Activated B cell treated with CpG ODN at 0.5 μM for 24 hours (primary cell): ENCODE measurements at regions of chr9 and their contacts with region 1.

Region 1: GRCh38 chr9:137223078-137223970 is 1.3 kb upstream of the RNF208 start:
- DNase-seq: peak; percentile 97
- ATAC-seq: peak; percentile 93
- H3K4me3 Mint-ChIP-seq: peak overlapping the region; percentile 83
- H3K27ac Mint-ChIP-seq: peak overlapping the region; percentile 73
- H3K4me1 Mint-ChIP-seq: peaks cover 20% of the 10 kb centered on the region
- H3K27me3 Mint-ChIP-seq: peaks cover 2% of the 10 kb centered on the region
- CTCF ChIP-seq: no peak

Region 2: DNA sequence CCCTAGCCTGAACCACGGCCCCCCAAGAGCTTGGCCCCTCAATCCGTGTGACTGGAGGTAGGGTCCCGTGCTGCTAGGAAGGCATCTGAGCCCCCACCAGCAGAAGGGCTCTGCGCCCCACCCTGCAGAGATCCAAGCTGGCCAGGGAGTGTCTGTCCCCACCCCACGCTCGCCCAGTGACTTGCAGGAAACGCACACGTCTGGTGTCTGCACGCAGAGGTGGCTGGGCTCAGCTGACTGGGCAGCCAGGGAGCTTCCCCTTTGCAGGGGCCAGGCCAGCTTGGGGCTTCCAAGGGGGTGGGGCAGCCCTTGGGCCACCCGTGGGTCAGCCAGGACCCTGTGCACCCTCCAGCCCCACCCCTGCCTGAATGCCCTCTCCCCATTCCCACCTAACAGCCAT is 701.8 kb before region 1 on chr9:
- CTCF ChIA-PET with region 1: no interaction called
- POLR2A ChIA-PET with region 1: no interaction called
- intact Hi-C with region 1: no loop called
- DNase-seq: no peak
- ATAC-seq: peak; percentile 25
- H3K4me3 Mint-ChIP-seq: no peak overlapping the region
- H3K27ac Mint-ChIP-seq: no peak overlapping the region
- H3K4me1 Mint-ChIP-seq: peaks cover 7% of the 10 kb centered on the region
- H3K27me3 Mint-ChIP-seq: no peaks in the 10 kb centered on the region
- CTCF ChIP-seq: no peak

Region 3: DNA sequence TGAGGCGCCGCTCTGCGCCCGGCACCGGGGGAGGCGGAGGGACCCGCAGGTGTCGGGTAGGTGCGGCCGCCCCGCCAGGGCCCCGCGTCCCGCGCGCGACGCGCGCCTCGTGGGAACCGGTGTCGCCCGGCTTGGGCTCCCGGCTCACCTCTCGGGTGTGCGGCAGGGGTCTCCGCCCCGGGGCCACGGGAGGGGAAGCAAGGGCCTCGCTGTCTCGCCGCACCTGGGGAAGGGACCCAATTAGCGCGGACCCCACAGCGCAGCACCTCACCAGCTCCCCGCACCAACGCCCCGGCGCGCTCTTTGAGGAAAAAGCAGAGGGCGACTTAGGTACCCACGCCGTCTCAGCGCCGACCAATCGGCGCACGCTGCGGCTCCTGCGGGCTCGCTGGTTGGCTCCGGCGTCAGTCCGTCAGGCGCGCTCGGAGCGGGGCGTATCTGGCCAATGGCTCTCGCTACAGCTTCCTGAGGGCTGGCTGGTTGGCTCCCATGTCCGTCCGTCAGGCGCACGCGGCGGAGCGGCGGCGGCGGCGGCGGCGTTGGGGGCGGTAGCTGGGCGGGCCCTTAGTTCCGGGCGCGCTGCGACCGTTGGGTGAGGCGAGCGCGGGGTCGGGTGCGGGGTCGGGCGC is 337.3 kb before region 1 on chr9 and contains the start of gene TRAF2:
- CTCF ChIA-PET with region 1: no interaction called
- POLR2A ChIA-PET with region 1: no interaction called
- intact Hi-C with region 1: loop called (anchors 10 kb)
- DNase-seq: peak; percentile 95
- ATAC-seq: peak; percentile 89
- H3K4me3 Mint-ChIP-seq: peak within 1 kb of the TSS; percentile 91
- H3K27ac Mint-ChIP-seq: peak within 1 kb of the TSS; percentile 88
- H3K4me1 Mint-ChIP-seq: peaks cover 44% of the 10 kb centered on the region
- H3K27me3 Mint-ChIP-seq: no peaks in the 10 kb centered on the region
- CTCF ChIP-seq: no peak
- total RNA-seq, gene TRAF2: 49.7 and 58.2 TPM in 2 replicates

Region 4: GRCh38 chr9:137046098-137046787 is 177.1 kb before region 1 on chr9 and contains the start of gene NPDC1:
- CTCF ChIA-PET with region 1: interaction called, 21 read pairs
- POLR2A ChIA-PET with region 1: interaction called, 14 read pairs
- intact Hi-C with region 1: loop called (anchors 1 kb)
- DNase-seq: peak; percentile 76
- ATAC-seq: peak; percentile 93
- H3K4me3 Mint-ChIP-seq: peak within 1 kb of the TSS; percentile 2
- H3K27ac Mint-ChIP-seq: no peak within 1 kb of the TSS
- H3K4me1 Mint-ChIP-seq: peaks cover 16% of the 10 kb centered on the region
- H3K27me3 Mint-ChIP-seq: peaks cover 34% of the 10 kb centered on the region
- CTCF ChIP-seq: peak; percentile 72
- total RNA-seq, gene NPDC1: 0.18 TPM in 1 of 2 replicates, not detected in the other

Region 5: DNA sequence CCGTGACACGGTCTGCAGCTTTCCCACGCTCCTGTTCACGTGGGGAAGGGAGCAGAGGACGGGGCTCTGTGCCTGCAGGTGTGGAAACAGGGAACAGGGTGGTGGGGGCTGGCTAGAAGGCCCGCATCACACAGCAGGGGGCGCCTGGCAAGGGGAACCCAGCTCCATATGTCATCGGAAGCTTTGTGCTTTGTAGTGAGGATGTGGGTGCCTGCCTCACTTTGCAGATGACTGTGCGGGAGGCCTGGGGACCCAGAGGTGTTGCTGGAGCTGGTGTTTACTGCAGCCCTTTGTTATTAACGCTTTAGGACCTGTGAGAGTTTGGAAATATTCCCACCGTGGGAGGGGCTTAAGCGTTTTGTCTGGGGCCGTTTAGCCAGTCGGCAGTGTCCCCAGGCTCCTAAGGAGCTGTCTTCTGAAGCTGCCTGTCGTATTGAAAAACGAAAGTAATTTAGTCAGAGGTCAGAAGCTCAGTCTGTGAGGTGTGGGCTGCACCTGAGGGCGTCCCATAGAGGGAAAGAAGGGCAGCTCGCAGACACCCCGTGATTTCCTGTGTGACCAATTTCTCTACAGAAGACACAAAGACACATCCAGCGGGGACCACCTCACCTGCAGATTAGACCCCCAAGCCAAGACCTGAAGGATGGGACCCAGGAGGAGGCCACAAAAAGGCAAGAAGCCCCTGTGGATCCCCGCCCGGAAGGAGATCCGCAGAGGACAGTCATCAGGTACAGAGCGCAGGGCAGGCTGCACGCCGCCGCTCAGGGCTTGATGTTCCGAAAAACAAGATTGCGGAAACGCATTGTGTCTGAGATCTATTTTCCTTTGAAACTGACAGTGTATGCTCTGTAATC is 127.4 kb before region 1 on chr9:
- CTCF ChIA-PET with region 1: interaction called, 10 read pairs
- POLR2A ChIA-PET with region 1: interaction called, 4 read pairs
- intact Hi-C with region 1: no loop called
- DNase-seq: peak; percentile 49
- ATAC-seq: peak; percentile 97
- H3K4me3 Mint-ChIP-seq: peak overlapping the region; percentile 60
- H3K27ac Mint-ChIP-seq: peak overlapping the region; percentile 83
- H3K4me1 Mint-ChIP-seq: peaks cover 7% of the 10 kb centered on the region
- H3K27me3 Mint-ChIP-seq: no peaks in the 10 kb centered on the region
- CTCF ChIP-seq: no peak

Region 6: GRCh38 chr9:137129456-137130175 is 93.7 kb before region 1 on chr9:
- CTCF ChIA-PET with region 1: no interaction called
- POLR2A ChIA-PET with region 1: interaction called, 19 read pairs
- intact Hi-C with region 1: no loop called
- DNase-seq: peak; percentile 88
- ATAC-seq: peak; percentile 95
- H3K4me3 Mint-ChIP-seq: peak overlapping the region; percentile 82
- H3K27ac Mint-ChIP-seq: peak overlapping the region; percentile 80
- H3K4me1 Mint-ChIP-seq: peaks cover 32% of the 10 kb centered on the region
- H3K27me3 Mint-ChIP-seq: peaks cover 2% of the 10 kb centered on the region
- CTCF ChIP-seq: no peak

Region 7: GRCh38 chr9:137150617-137151457 is 72.5 kb before region 1 on chr9:
- CTCF ChIA-PET with region 1: interaction called, 3 read pairs
- POLR2A ChIA-PET with region 1: interaction called, 15 read pairs
- intact Hi-C with region 1: loop called (anchors 2 kb)
- DNase-seq: peak; percentile 67
- ATAC-seq: peak; percentile 67
- H3K4me3 Mint-ChIP-seq: peak overlapping the region; percentile 52
- H3K27ac Mint-ChIP-seq: peak overlapping the region; percentile 92
- H3K4me1 Mint-ChIP-seq: peaks cover 14% of the 10 kb centered on the region
- H3K27me3 Mint-ChIP-seq: peaks cover 9% of the 10 kb centered on the region
- CTCF ChIP-seq: no peak

Region 8: DNA sequence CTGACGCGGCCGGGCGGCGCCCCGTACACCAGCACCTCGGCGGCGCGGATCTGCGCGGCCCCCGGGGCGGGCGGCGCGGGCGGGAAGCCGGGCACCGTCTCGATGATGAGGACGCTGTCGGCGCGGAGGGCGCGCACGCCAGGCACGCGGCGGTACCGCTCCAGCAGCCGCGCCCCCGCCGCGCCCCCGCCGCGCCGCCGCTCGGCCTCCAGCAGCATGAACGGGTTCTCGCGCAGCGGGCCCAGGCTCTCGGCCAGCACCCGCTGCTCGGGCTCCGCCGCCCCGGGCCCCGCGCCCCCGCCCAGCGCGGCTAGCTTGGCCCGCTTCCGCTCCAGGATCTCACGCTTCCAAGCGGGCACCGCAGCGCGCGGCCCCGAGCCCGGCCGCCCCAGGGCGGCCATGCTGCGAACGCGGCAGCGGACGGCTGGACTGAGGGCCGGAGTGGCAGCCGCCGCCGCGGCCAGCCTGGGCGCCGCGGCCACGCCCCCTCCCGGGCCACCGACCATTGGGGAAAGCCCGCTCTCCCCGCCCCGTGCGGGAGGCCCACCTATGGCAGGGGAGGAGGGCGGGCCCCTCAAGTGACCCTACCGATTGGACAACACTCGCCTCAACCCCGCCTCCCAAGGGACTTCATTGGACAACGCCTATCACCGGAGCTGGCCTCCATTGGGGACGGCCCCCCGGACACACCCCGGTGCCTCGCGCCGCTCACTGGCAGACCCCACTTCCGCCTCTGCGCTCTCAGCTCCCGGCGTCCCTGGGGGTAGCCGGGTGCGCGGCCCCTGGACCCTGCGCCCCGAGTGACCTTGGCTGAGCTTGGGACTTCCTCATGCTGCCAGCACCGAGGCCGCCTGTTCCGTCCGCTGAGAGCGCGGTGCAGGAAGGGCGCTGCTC is 22.8 kb before region 1 on chr9 and contains the start of gene TPRN:
- CTCF ChIA-PET with region 1: interaction called, 4 read pairs
- POLR2A ChIA-PET with region 1: interaction called, 53 read pairs
- intact Hi-C with region 1: loop called (anchors 1 kb)
- DNase-seq: peak; percentile 92
- ATAC-seq: peak; percentile 95
- H3K4me3 Mint-ChIP-seq: peak within 1 kb of the TSS; percentile 83
- H3K27ac Mint-ChIP-seq: peak within 1 kb of the TSS; percentile 79
- H3K4me1 Mint-ChIP-seq: peaks cover 39% of the 10 kb centered on the region
- H3K27me3 Mint-ChIP-seq: no peaks in the 10 kb centered on the region
- CTCF ChIP-seq: no peak
- total RNA-seq, gene TPRN: 9.3 and 11.4 TPM in 2 replicates